HepG2 (cell line): ENCODE measurements at regions of chr9 and their contacts with region 1.

Region 1: GRCh38 chr9:112355427-112355897 is 22.0 kb upstream of the PTBP3 start:
- DNase-seq: no peak
- ATAC-seq: no peak
- H3K4me3 ChIP-seq: no peak overlapping the region
- H3K27ac ChIP-seq: no peak overlapping the region
- H3K4me1 ChIP-seq: peaks cover 41% of the 10 kb centered on the region
- H3K27me3 ChIP-seq: no peaks in the 10 kb centered on the region
- CTCF ChIP-seq: no peak
- EP300 ChIP-seq: no peak
- POLR2A ChIP-seq: no peak
- RAD21 ChIP-seq: no peak

Region 2: DNA sequence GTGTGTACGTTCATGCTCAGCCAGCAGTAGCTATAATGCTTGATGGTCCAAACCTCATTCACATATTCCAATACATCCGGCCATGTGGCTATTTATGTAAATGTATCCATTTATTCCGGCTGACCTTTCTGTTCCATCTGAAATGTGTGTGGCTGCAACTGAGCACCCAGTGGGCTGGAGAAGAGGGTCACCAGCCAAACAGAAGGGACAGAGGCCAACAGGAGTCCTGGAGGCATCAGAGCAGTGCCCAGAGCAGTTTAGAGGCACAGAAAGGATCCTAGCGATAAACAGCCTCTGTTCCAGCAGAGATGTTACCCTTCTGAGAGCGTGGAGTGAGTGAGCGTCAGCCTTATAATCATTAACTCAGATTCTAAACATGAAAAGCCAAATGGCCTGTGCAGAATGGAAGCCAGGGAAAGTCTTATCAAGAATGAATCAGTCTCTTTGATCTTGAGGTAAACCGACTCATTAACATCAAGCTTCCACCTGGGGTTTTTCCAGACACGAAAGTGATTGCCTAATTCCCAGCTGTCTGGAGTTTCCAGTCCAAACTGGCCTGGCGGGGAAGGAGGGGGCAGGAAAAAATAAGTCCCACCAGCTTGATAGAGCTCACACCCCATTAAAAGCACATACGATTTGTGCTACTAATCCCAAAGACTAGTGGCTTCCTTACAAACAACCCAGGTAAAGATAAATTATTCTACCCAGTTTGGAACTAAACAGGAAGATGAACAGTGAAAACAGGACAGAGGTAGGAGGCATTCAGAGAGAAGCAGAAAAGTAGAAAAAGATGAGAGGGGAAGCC is 236.0 kb before region 1 on chr9:
- CTCF ChIA-PET with region 1: no interaction called
- POLR2A ChIA-PET with region 1: interaction called, 3 read pairs
- in situ Hi-C with region 1: loop called (anchors 5 kb)
- intact Hi-C with region 1: no loop called
- DNase-seq: peak; percentile 99
- ATAC-seq: peak; percentile 97
- H3K4me3 ChIP-seq: peak overlapping the region in 1 of 3 experiments; percentile 60; a peak in 2 of 6 replicates
- H3K27ac ChIP-seq: peak overlapping the region; percentile 96
- H3K4me1 ChIP-seq: peaks cover 64% of the 10 kb centered on the region
- H3K27me3 ChIP-seq: no peaks in the 10 kb centered on the region
- CTCF ChIP-seq: no peak
- EP300 ChIP-seq: peak; percentile 14 to 96; a peak in 3 of 4 replicates
- POLR2A ChIP-seq: peak; percentile 67 to 69; a peak in 3 of 4 replicates
- RAD21 ChIP-seq: no peak

Region 3: DNA sequence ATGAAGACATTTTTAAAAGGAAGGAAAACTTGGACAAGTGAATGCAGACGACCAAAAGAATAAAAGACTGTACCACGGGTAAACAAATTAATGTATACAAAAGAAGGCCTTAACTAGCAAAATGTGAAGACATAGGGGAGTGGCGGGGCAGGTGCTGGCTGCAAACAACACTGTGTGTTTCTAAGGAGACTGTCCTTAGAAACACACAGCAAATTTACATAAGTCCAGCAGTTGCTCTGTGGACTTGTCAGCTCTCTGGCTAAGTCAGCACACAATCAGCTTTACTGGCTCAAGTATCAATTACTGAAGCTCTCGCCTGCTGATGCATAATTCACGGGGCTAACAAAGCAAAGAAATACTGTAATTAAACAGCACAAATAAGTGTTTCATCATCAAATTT is 46.9 kb before region 1 on chr9:
- CTCF ChIA-PET with region 1: no interaction called
- POLR2A ChIA-PET with region 1: no interaction called
- in situ Hi-C with region 1: no loop called
- intact Hi-C with region 1: no loop called
- DNase-seq: peak; percentile 56
- ATAC-seq: peak; percentile 97
- H3K4me3 ChIP-seq: no peak overlapping the region
- H3K27ac ChIP-seq: peak overlapping the region; percentile 66
- H3K4me1 ChIP-seq: peaks cover 65% of the 10 kb centered on the region
- H3K27me3 ChIP-seq: no peaks in the 10 kb centered on the region
- CTCF ChIP-seq: no peak
- EP300 ChIP-seq: no peak
- POLR2A ChIP-seq: no peak
- RAD21 ChIP-seq: no peak